Breast epithelium (tissue), 4 donors: ENCODE measurements at regions of chr3 and their contacts with region 1.

Region 1: DNA sequence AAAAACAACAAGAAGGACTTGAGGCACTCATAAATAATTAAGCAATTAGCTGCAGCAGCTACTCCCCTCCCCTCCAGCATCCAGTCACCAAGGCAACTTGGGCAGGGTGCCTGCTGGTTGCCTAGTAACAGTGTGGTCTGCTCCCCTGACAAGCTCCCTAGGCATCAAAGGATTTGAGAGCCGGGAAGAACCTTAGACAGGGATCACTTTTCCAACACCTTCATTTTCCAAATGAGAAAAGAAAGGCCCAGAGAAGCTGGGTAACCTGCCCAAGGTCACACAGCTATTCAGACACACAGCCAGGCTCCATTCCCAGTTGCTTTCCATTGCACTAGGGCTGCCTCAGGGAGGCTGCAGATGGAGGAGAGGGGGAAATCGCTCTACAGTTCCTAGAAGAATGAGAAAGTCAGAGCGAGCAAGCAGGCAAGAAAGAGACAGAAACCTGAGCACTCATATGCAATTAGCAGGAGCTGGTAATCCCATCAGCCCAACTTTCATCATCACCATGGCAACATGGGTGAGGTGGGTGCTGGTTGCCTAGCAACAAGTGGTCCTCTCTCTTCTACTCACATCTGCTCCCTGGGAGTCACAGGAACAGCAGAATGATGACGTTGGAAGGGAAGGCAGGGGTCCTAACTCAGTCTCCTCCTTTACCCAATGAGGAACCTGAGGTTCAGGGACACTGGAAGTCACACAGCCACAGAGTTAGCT is 3.6 kb upstream of the EIF4E3 start:
- DNase-seq: no peak
- H3K4me3 ChIP-seq: no peak overlapping the region
- H3K27ac ChIP-seq: no peak overlapping the region
- H3K4me1 ChIP-seq: no peaks in the 10 kb centered on the region
- H3K27me3 ChIP-seq: no peaks in the 10 kb centered on the region
- CTCF ChIP-seq: no peak
- POLR2A ChIP-seq: no peak

Region 2: GRCh38 chr3:71657831-71658530 is 70.8 kb before region 1 on chr3:
- intact Hi-C with region 1: loop called (anchors 2 kb)
- DNase-seq: peak; percentile 95 to 98
- H3K4me3 ChIP-seq: peak overlapping the region in 1 of 3 donors; percentile 9
- H3K27ac ChIP-seq: peak overlapping the region; percentile 90 to 95
- H3K4me1 ChIP-seq: no peaks in the 10 kb centered on the region
- H3K27me3 ChIP-seq: no peaks in the 10 kb centered on the region
- CTCF ChIP-seq: no peak
- POLR2A ChIP-seq: no peak

Region 3: DNA sequence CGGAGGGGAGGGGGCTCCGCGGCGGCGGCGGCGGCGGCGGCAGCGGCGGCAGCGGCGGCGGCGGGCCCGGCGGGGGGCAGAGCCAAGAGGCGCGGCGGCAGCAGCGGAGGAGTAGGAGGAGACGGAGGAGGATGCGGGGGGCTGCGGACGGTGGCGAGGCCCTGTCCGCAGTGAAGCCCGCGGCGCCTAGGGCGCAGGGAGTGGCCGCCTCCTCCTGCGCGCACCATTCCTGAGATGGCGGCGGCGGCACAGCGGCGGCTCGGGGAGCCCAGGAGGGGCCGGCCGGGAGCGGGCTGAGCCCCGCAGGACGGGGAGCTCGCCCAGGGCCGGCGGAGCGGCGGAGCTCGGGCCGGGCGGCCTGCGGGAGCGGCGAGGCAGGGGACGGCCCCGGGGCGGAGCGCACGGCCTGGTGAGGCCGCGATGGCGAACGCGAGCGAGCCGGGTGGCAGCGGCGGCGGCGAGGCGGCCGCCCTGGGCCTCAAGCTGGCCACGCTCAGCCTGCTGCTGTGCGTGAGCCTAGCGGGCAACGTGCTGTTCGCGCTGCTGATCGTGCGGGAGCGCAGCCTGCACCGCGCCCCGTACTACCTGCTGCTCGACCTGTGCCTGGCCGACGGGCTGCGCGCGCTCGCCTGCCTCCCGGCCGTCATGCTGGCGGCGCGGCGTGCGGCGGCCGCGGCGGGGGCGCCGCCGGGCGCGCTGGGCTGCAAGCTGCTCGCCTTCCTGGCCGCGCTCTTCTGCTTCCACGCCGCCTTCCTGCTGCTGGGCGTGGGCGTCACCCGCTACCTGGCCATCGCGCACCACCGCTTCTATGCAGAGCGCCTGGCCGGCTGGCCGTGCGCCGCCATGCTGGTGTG is 25.1 kb after region 1 on chr3 and contains the start of gene GPR27:
- intact Hi-C with region 1: no loop called
- DNase-seq: no peak
- H3K4me3 ChIP-seq: peak within 1 kb of the TSS; percentile 39 to 87 (median 64)
- H3K27ac ChIP-seq: peak within 1 kb of the TSS; percentile 33 to 70
- H3K4me1 ChIP-seq: no peaks in the 10 kb centered on the region
- H3K27me3 ChIP-seq: no peaks in the 10 kb centered on the region
- CTCF ChIP-seq: no peak
- POLR2A ChIP-seq: no peak
- total RNA-seq, gene GPR27: 0.32 to 4.0 (median 2.0) TPM

Region 4: DNA sequence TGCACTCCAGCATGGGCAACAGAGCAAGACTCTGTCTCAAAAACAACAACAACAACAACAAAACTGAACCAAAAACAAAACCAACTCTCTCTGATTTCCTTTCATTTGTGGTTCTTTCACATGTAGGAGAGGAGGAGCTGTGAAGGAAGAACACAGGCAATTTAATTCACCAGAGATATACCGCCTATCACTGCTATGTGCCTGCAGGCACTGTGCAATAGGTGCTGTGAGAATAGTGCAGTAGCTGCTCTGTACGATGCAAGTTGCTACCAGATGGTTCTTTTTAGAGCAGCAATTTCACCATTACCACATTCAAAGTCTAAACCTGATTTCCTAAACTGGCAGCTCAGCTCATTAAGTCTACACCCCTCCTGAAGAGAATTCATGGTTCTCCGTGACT is 67.5 kb after region 1 on chr3:
- intact Hi-C with region 1: no loop called
- DNase-seq: no peak
- H3K4me3 ChIP-seq: no peak overlapping the region
- H3K27ac ChIP-seq: no peak overlapping the region
- H3K4me1 ChIP-seq: no peaks in the 10 kb centered on the region
- H3K27me3 ChIP-seq: no peaks in the 10 kb centered on the region
- CTCF ChIP-seq: no peak
- POLR2A ChIP-seq: no peak